Mammary epithelial cell (primary cell): ENCODE measurements at regions of chr3 and their contacts with region 1.

Region 1: DNA sequence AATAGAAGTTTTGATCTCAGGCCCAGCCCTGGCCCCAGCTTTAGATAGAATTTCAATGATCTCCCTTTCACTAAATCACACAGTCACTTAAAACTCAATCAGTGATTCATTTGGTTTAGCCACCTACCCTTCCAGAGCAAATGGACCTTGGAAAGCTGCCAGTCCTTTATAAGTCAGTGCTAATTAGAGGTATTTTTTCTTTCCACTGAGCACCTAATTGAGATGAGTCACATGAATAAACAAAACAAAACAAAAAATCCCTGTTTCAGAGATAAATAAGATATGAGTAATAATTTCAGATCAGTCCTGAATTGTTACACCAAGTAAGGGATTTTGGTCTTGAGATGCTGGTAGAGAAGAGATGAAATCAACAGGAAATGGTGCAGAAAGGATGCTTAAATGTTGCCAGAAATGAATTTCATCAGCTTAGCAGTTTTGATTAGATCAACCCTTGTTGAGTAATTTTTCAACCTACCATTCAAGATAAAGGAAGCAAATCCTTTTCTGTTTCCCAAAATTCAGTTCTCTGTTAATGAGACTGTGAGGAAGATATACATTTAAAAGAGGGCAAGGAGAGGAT is 352.0 kb upstream of the COL8A1 start:
- DNase-seq: peak; percentile 20
- H3K4me3 ChIP-seq: no peak overlapping the region
- H3K27ac ChIP-seq: no peak overlapping the region
- H3K4me1 ChIP-seq: no peaks in the 10 kb centered on the region
- H3K27me3 ChIP-seq: peaks cover 2% of the 10 kb centered on the region
- CTCF ChIP-seq: no peak

Region 2: GRCh38 chr3:99172736-99173657 is 113.4 kb before region 1 on chr3:
- CTCF ChIA-PET with region 1: no interaction called
- dilution Hi-C with region 1: no loop called
- in situ Hi-C with region 1: loop called in 1 of 2 experiments (anchors 25 kb)
- intact Hi-C with region 1: no loop called
- DNase-seq: peak; percentile 60
- H3K4me3 ChIP-seq: no peak overlapping the region
- H3K27ac ChIP-seq: no peak overlapping the region
- H3K4me1 ChIP-seq: no peaks in the 10 kb centered on the region
- H3K27me3 ChIP-seq: no peaks in the 10 kb centered on the region
- CTCF ChIP-seq: peak; percentile 82 to 84